ENCODE measurements at regions of chr16 and their contacts with region 1.

Region 1: GRCh38 chr16:18801197-18801972 is at the start of gene ARL6IP1:
- DNase-seq: peak; percentile 98 to 100 (median 99)
- ATAC-seq: peak; percentile 93
- H3K4me3 ChIP-seq: peak within 1 kb of the TSS; percentile 98
- H3K4me3 Mint-ChIP-seq: peak within 1 kb of the TSS; percentile 96
- H3K27ac ChIP-seq: peak within 1 kb of the TSS; percentile 91
- H3K27ac Mint-ChIP-seq: peak within 1 kb of the TSS; percentile 88
- H3K4me1 ChIP-seq: peaks cover 44% of the 10 kb centered on the region
- H3K4me1 Mint-ChIP-seq: peaks cover 49% of the 10 kb centered on the region
- H3K27me3 ChIP-seq: no peaks in the 10 kb centered on the region
- H3K27me3 Mint-ChIP-seq: no peaks in the 10 kb centered on the region
- CTCF ChIP-seq: peak; percentile 84
- total RNA-seq, gene ARL6IP1: 109 to 111 TPM

Region 2: GRCh38 chr16:18789850-18790724 is 11.3 kb before region 1 on chr16 and contains the start of gene RPS15A:
- CTCF ChIA-PET with region 1: interaction called, 95 read pairs
- POLR2A ChIA-PET with region 1: interaction called, 232 read pairs
- intact Hi-C with region 1: loop called (anchors 1 kb)
- DNase-seq: peak; percentile 84 to 99 (median 89)
- ATAC-seq: peak; percentile 94
- H3K4me3 ChIP-seq: peak within 1 kb of the TSS; percentile 79
- H3K4me3 Mint-ChIP-seq: peak within 1 kb of the TSS; percentile 92
- H3K27ac ChIP-seq: peak within 1 kb of the TSS; percentile 63 to 66
- H3K27ac Mint-ChIP-seq: peak within 1 kb of the TSS; percentile 83
- H3K4me1 ChIP-seq: peaks cover 47% of the 10 kb centered on the region
- H3K4me1 Mint-ChIP-seq: peaks cover 49% of the 10 kb centered on the region
- H3K27me3 ChIP-seq: no peaks in the 10 kb centered on the region
- H3K27me3 Mint-ChIP-seq: no peaks in the 10 kb centered on the region
- CTCF ChIP-seq: no peak
- total RNA-seq, gene RPS15A: 3,821 to 3,943 TPM

Region 3: GRCh38 chr16:18832006-18832405 is 30.6 kb after region 1 on chr16:
- CTCF ChIA-PET with region 1: interaction called, 10 read pairs
- POLR2A ChIA-PET with region 1: interaction called, 4 read pairs
- intact Hi-C with region 1: no loop called
- DNase-seq: no peak
- ATAC-seq: no peak
- H3K4me3 ChIP-seq: no peak overlapping the region
- H3K4me3 Mint-ChIP-seq: no peak overlapping the region
- H3K27ac ChIP-seq: no peak overlapping the region
- H3K27ac Mint-ChIP-seq: no peak overlapping the region
- H3K4me1 ChIP-seq: no peaks in the 10 kb centered on the region
- H3K4me1 Mint-ChIP-seq: no peaks in the 10 kb centered on the region
- H3K27me3 ChIP-seq: no peaks in the 10 kb centered on the region
- H3K27me3 Mint-ChIP-seq: no peaks in the 10 kb centered on the region
- CTCF ChIP-seq: no peak

Region 4: DNA sequence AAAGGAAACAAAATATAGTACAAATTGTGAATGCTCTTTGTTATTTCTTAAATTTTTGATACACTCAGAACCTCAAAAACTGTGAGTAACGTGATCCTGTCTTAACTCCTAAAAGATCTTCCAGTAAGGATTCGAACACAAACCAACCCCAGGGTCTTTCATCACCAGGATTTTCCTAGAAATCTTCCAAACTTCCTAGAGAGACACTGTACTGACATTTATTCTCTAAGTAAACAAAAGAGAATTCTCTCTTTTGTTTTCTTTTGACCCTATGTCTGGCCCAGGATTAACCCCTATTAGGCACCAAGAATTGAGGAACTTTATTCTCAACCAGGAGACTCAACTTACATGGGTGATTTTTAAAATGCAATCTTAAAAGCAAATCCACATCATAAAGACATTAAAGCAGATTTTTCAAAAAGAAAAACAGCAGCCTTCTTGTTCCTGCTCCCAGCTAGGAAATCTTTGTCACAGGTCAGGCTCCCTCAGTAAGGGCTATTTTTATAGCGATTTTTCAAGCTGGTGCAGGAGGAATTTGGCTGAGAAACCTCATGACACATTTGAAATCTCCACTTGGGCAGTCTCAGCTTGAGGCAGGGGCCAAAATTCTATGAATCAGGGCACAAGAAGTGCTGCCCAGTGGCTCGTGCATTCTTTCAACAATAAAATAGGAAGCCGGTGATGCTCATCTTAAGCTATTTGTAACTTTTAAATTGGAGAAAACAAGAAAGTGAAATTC is 131.0 kb after region 1 on chr16:
- CTCF ChIA-PET with region 1: interaction called, 3 read pairs
- POLR2A ChIA-PET with region 1: interaction called, 4 read pairs
- intact Hi-C with region 1: loop called in 1 of 2 experiments (anchors 5 kb)
- DNase-seq: no peak
- ATAC-seq: no peak
- H3K4me3 ChIP-seq: no peak overlapping the region
- H3K4me3 Mint-ChIP-seq: no peak overlapping the region
- H3K27ac ChIP-seq: no peak overlapping the region
- H3K27ac Mint-ChIP-seq: no peak overlapping the region
- H3K4me1 ChIP-seq: no peaks in the 10 kb centered on the region
- H3K4me1 Mint-ChIP-seq: peaks cover 5% of the 10 kb centered on the region
- H3K27me3 ChIP-seq: no peaks in the 10 kb centered on the region
- H3K27me3 Mint-ChIP-seq: no peaks in the 10 kb centered on the region
- CTCF ChIP-seq: no peak

Region 5: DNA sequence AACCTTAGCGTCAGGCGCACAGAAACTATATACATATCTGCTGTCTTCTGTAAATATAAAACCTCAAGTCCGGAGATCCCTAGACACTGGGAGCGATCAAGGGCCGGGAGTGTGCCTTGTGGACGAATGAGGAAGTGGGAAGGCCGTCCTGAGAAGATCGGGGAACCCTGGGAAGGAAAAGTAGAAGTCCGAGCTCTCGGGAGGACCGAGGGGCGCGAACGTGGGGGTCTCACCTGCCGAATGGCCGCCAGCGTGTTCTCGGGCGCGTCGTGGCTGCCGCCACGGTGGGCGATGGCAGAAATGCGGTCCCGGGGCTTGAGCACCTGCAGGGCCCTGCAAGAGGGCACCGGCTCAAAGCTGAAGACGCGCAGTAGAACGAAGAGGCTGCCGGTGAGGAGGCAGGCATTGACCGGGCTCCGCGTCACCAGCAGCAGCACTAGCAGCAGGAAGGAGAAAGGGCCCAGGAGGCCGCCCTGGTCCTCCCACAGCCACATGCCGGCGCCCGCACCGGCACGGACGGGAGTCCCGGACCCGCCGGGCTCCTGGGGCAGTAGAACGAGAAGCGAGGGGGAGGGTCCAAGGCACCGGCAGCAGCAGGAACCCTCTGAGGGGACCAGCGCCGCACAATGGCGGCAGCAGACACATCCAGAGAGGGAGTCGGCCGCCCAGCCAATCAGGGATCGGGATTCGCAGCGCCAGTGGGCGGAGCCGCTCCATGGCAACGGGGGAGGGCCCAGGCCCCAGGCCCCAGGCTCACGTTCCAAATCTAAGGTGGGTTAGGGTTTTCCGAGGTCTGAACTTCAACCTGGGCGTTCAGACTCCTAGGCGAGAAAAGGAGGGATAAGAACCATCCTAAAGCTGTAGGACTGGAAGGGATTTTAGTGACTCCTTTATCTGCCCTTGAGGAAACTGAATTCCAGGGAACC is 720.3 kb after region 1 on chr16 and contains the start of gene GDE1:
- CTCF ChIA-PET with region 1: no interaction called
- POLR2A ChIA-PET with region 1: no interaction called
- intact Hi-C with region 1: loop called in 1 of 2 experiments (anchors 5 kb)
- DNase-seq: peak; percentile 85 to 97 (median 93)
- ATAC-seq: peak; percentile 76
- H3K4me3 ChIP-seq: peak within 1 kb of the TSS; percentile 93
- H3K4me3 Mint-ChIP-seq: peak within 1 kb of the TSS; percentile 99
- H3K27ac ChIP-seq: peak within 1 kb of the TSS; percentile 58 to 78
- H3K27ac Mint-ChIP-seq: peak within 1 kb of the TSS; percentile 84
- H3K4me1 ChIP-seq: peaks cover 55% of the 10 kb centered on the region
- H3K4me1 Mint-ChIP-seq: peaks cover 69% of the 10 kb centered on the region
- H3K27me3 ChIP-seq: no peaks in the 10 kb centered on the region
- H3K27me3 Mint-ChIP-seq: no peaks in the 10 kb centered on the region
- CTCF ChIP-seq: peak; percentile 27
- total RNA-seq, gene GDE1: 22.0 to 22.2 TPM